ENCODE measurements at regions of chr6 and their contacts with region 1.

Region 1: DNA sequence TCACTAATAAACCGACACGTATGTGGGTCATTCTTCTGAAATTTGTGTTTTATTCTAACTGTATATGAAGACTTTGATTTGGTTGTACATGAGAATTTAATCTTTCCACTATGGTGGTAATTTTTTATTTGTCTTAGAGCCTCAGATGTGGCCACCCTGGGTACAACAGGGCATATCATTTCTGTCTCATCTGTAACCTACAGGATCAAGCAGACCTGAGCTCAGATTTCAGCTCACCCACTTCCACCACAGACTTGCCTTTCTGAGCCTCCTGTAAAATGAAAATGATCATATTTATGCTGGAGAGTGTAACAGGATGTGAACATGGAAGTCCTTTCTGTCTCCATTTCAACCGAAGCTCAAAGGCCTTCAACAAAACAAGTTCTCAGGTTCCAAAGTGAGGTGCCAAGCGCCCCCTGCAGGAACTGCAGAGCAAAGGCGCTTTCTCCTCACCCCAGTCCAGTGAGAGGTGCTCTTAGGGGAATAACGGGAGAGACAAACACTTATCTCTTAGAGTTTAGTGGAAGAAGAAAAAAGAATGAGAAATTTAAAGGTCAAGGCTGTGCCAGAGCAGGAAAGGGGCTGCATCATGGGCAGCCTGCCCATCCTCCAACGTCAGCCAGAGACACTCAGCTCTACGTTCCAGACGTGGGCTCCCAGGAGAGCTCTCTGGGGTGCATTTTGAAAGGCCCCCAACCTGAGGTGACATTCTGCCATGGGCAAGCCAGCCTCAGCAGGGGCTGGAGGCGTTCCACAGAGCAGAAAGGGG is 23.0 kb upstream of the CD24 start:
- DNase-seq: peak; percentile 59
- ATAC-seq: peak; percentile 77
- H3K4me3 Mint-ChIP-seq: no peak overlapping the region
- H3K27ac Mint-ChIP-seq: no peak overlapping the region
- H3K4me1 Mint-ChIP-seq: peaks cover 3% of the 10 kb centered on the region
- H3K27me3 Mint-ChIP-seq: peaks cover 1% of the 10 kb centered on the region
- CTCF ChIP-seq: peak; percentile 84

Region 2: DNA sequence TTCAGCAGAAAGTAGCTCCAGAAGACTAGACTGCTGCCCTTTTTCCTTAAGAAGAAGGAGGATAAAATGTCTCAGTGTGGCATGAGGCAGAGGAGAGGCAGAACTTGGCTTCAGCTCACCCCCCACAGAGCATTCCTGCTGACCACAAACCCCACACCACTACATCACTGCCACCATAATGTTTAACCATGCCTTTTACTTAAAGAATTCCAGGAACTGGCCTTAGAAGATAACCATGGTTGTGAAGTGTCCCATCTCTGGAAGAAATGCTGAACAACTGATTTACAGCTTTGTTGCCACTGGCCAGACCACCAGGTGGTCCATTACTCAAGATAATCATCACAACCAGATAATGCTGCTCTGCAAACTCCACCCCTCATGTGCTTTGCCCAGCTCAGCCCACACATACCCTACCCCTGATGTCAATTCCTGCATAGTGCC is 177.1 kb before region 1 on chr6:
- CTCF ChIA-PET with region 1: no interaction called
- POLR2A ChIA-PET with region 1: no interaction called
- intact Hi-C with region 1: no loop called
- DNase-seq: no peak
- ATAC-seq: no peak
- H3K4me3 Mint-ChIP-seq: no peak overlapping the region
- H3K27ac Mint-ChIP-seq: no peak overlapping the region
- H3K4me1 Mint-ChIP-seq: no peaks in the 10 kb centered on the region
- H3K27me3 Mint-ChIP-seq: peaks cover 3% of the 10 kb centered on the region
- CTCF ChIP-seq: no peak

Region 3: GRCh38 chr6:106979427-106979884 is 18.1 kb before region 1 on chr6:
- CTCF ChIA-PET with region 1: interaction called, 37 read pairs
- POLR2A ChIA-PET with region 1: interaction called, 3 read pairs
- intact Hi-C with region 1: no loop called
- DNase-seq: peak; percentile 89
- ATAC-seq: peak; percentile 71
- H3K4me3 Mint-ChIP-seq: no peak overlapping the region
- H3K27ac Mint-ChIP-seq: no peak overlapping the region
- H3K4me1 Mint-ChIP-seq: no peaks in the 10 kb centered on the region
- H3K27me3 Mint-ChIP-seq: peaks cover 29% of the 10 kb centered on the region
- CTCF ChIP-seq: peak; percentile 96

Region 4: DNA sequence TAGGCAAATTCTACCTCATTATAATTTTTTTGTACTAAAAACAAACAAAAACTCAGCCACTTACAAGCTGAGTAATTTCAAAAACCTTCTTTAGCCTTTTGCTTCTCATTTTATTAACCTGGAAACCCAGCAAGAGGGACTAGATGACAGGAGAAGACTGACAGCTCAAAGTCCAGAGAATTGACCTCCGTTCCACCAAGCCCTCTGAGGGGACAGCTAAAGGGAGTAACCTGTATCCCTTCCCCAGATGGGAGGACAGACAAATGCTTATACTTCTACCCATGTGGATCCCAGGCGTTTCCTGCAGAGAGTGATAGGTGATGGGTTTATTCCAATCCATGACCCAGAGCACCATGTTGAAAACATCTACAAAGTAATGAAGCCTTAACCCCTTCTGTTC is 11.9 kb after region 1 on chr6:
- CTCF ChIA-PET with region 1: interaction called, 18 read pairs
- POLR2A ChIA-PET with region 1: no interaction called
- intact Hi-C with region 1: no loop called
- DNase-seq: no peak
- ATAC-seq: no peak
- H3K4me3 Mint-ChIP-seq: no peak overlapping the region
- H3K27ac Mint-ChIP-seq: no peak overlapping the region
- H3K4me1 Mint-ChIP-seq: no peaks in the 10 kb centered on the region
- H3K27me3 Mint-ChIP-seq: no peaks in the 10 kb centered on the region
- CTCF ChIP-seq: no peak

Region 5: DNA sequence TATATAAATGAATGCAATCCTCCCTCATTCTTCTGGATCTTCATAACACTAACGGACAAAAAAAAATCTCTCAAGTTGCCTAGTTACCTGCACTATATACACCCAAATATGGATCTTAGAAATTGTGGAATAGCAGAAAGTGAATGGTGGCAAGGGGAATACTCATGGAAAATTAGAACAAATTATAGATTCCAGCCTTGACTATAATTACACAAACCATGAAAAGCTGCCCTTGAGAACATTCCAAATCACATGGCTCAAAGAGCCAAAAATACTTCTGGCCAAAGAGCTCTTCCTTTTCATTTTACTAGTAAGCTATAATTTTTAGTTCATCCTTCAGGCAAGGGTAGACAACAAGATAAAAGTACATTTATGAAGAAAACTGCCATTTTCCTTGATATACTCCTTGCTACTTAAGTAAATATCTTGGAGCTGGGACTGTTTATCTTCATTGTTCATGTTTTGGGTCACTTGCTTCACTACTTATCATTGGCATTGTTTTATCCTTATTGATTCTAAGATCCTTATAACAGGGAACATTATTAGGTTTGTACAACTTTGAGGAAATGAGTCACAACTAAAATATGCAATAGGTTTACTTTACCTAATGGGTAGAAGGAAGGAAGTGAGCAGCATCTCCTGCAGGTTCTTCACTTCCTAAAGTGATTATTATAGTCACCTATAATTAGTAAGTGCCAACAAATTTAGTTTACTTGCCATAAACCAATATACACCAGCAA is 24.0 kb after region 1 on chr6:
- CTCF ChIA-PET with region 1: interaction called, 11 read pairs
- POLR2A ChIA-PET with region 1: no interaction called
- intact Hi-C with region 1: no loop called
- DNase-seq: no peak
- ATAC-seq: no peak
- H3K4me3 Mint-ChIP-seq: no peak overlapping the region
- H3K27ac Mint-ChIP-seq: no peak overlapping the region
- H3K4me1 Mint-ChIP-seq: no peaks in the 10 kb centered on the region
- H3K27me3 Mint-ChIP-seq: no peaks in the 10 kb centered on the region
- CTCF ChIP-seq: no peak